ENCODE measurements at regions of chr3 and their contacts with region 1.

Region 1: DNA sequence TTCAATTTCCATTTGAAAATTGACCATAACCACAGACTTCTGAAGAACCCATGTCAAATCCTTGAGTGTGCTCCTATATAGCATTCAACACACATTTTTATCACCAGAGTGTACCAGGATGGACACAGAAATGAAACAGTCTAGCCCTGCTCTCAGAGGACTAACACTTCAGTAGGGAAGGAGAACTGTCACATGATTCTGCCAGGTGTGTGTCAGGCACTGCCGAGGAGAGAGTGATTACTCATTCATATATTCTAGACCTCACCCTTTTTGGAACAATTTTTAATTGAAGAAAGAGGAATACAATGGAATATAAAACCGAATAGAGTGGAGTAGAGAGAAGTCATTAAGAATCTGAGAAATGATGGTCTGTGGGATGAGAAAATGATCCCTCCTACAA is 125.8 kb downstream of the ERC2 start:
- DNase-seq: no peak
- ATAC-seq: no peak
- H3K4me3 ChIP-seq: no peak overlapping the region
- H3K27ac ChIP-seq: no peak overlapping the region
- H3K4me1 ChIP-seq: no peaks in the 10 kb centered on the region
- H3K27me3 ChIP-seq: no peaks in the 10 kb centered on the region
- CTCF ChIP-seq: no peak

Region 2: GRCh38 chr3:56233742-56234141 is 108.7 kb before region 1 on chr3:
- CTCF ChIA-PET with region 1: no interaction called
- POLR2A ChIA-PET with region 1: no interaction called
- in situ Hi-C with region 1: no loop called
- intact Hi-C with region 1: no loop called
- DNase-seq: no peak
- ATAC-seq: no peak
- H3K4me3 ChIP-seq: no peak overlapping the region
- H3K27ac ChIP-seq: no peak overlapping the region
- H3K4me1 ChIP-seq: no peaks in the 10 kb centered on the region
- H3K27me3 ChIP-seq: no peaks in the 10 kb centered on the region
- CTCF ChIP-seq: no peak

Region 3: DNA sequence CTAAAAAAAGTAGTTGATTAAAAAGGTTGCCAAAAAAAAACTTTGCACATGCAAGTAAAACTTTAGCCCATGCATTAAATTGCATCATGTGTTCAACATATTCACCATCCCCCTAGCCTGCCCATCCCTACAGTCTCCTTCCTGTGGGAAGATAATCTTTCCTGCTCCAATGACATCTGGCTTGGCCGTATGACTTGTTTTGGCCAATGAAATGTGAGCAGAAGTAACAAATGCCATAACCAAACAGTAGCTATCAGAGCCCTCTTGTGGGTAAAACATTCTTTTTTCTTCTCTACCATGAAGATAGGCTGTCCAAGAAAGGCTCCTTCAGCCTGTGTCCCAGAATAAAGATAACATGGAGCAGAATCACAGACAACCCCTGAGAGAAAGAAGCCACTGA is 110.5 kb after region 1 on chr3:
- CTCF ChIA-PET with region 1: interaction called, 3 read pairs
- POLR2A ChIA-PET with region 1: no interaction called
- in situ Hi-C with region 1: no loop called
- intact Hi-C with region 1: loop called (anchors 5 kb)
- DNase-seq: no peak
- ATAC-seq: no peak
- H3K4me3 ChIP-seq: no peak overlapping the region
- H3K27ac ChIP-seq: no peak overlapping the region
- H3K4me1 ChIP-seq: no peaks in the 10 kb centered on the region
- H3K27me3 ChIP-seq: no peaks in the 10 kb centered on the region; the same call in 1 of the 2 replicates
- CTCF ChIP-seq: no peak

Region 4: DNA sequence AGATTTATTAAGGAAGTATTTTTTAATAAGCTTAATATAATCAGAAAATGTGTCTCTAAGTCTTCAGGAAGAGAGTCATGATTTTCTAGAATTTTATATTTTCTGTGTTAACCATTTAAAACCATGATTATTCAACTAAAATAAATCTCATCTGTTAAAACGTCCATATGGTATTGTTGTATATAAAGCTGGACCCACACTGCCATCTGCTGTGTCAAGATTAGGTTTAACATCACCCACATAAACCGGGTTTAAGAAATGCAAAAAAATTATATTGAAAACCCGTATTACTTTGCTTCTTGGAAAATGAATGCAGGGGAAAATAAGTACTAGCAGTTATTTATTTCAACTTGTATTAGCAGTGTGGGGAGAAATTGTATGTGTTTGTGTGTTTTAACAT is 205.0 kb after region 1 on chr3:
- CTCF ChIA-PET with region 1: no interaction called
- POLR2A ChIA-PET with region 1: no interaction called
- in situ Hi-C with region 1: no loop called
- intact Hi-C with region 1: loop called (anchors 5 kb)
- DNase-seq: no peak
- ATAC-seq: no peak; the same call in 1 of the 2 replicates
- H3K4me3 ChIP-seq: no peak overlapping the region
- H3K27ac ChIP-seq: no peak overlapping the region
- H3K4me1 ChIP-seq: no peaks in the 10 kb centered on the region
- H3K27me3 ChIP-seq: no peaks in the 10 kb centered on the region
- CTCF ChIP-seq: peak; percentile 25; the same call in 1 of the 2 replicates